ENCODE measurements at regions of chr2 and their contacts with region 1.

Region 1: DNA sequence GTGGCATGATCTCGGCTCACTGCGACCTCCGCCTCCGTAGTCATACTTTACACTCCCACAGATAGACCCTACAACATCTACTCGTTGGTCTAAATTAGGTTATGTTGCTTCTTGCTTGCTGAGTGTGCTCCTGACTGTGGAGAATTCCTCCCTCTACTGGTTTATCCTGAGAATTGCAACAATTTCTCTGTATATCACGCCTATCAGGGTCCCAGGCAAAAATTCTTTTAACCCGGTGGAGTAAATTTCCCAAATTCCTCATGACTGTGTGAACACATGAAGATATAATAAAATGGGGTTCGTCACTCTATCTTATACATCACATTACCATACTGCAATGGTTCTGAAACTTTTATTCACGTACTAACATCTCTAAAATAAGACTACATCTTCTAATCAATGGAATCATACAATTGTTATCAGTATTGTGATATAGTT is 156.7 kb downstream of the EVA1A start:
- DNase-seq: peak in 4 of 5 donors; percentile 31 to 37 (median 35)
- H3K4me3 ChIP-seq: no peak overlapping the region
- H3K4me3 Mint-ChIP-seq: no peak overlapping the region
- H3K27ac ChIP-seq: no peak overlapping the region
- H3K27ac Mint-ChIP-seq: no peak overlapping the region
- H3K4me1 ChIP-seq: no peaks in the 10 kb centered on the region
- H3K4me1 Mint-ChIP-seq: no peaks in the 10 kb centered on the region
- H3K27me3 ChIP-seq: peaks cover 6% of the 10 kb centered on the region
- H3K27me3 Mint-ChIP-seq: peaks cover 19 to 20% of the 10 kb centered on the region in 2 donors

Region 2: GRCh38 chr2:75199428-75200011 is 204.5 kb before region 1 on chr2 and contains the start of gene TACR1:
- CTCF ChIA-PET with region 1: interaction called, 4 read pairs
- POLR2A ChIA-PET with region 1: no interaction called
- intact Hi-C with region 1: loop called (anchors 1 kb)
- DNase-seq: peak; percentile 35 to 68 (median 46)
- H3K4me3 ChIP-seq: peak within 1 kb of the TSS in 1 of 2 donors; percentile 18
- H3K4me3 Mint-ChIP-seq: peak within 1 kb of the TSS; percentile 75 to 92 (median 84)
- H3K27ac ChIP-seq: no peak within 1 kb of the TSS
- H3K27ac Mint-ChIP-seq: no peak within 1 kb of the TSS
- H3K4me1 ChIP-seq: peaks cover 11% of the 10 kb centered on the region
- H3K4me1 Mint-ChIP-seq: peaks cover 2 to 18% (median 12%) of the 10 kb centered on the region in 4 donors
- H3K27me3 ChIP-seq: peaks cover 19% of the 10 kb centered on the region
- H3K27me3 Mint-ChIP-seq: peaks cover 43 to 53% of the 10 kb centered on the region in 2 donors
- total RNA-seq, gene TACR1: not detected

Region 3: DNA sequence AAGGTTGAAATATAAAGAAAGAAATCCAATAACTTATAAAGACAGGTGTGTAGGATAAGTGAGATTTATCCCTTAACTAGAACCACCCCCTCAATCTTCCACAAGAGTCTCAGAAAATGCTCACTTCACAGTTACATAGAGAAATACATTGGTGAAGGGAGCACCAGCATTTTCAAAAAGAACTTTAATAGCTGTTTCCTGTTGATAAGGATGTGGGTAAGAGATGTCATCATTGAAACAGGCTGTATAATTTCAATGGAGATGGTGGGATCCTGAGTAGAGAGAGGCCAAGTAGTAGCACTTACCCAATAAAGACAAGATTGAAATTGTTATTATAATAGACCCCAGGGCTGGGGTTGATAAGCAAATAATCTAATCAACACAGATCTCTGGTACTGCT is 42.5 kb before region 1 on chr2:
- CTCF ChIA-PET with region 1: no interaction called
- POLR2A ChIA-PET with region 1: no interaction called
- intact Hi-C with region 1: no loop called
- DNase-seq: no peak
- H3K4me3 ChIP-seq: no peak overlapping the region
- H3K4me3 Mint-ChIP-seq: no peak overlapping the region
- H3K27ac ChIP-seq: no peak overlapping the region
- H3K27ac Mint-ChIP-seq: no peak overlapping the region
- H3K4me1 ChIP-seq: no peaks in the 10 kb centered on the region
- H3K4me1 Mint-ChIP-seq: no peaks in the 10 kb centered on the region
- H3K27me3 ChIP-seq: no peaks in the 10 kb centered on the region
- H3K27me3 Mint-ChIP-seq: no peaks in the 10 kb centered on the region

Region 4: GRCh38 chr2:75375646-75376582 is 28.1 kb before region 1 on chr2:
- CTCF ChIA-PET with region 1: no interaction called
- POLR2A ChIA-PET with region 1: no interaction called
- intact Hi-C with region 1: no loop called
- DNase-seq: no peak
- H3K4me3 ChIP-seq: no peak overlapping the region
- H3K4me3 Mint-ChIP-seq: no peak overlapping the region
- H3K27ac ChIP-seq: no peak overlapping the region
- H3K27ac Mint-ChIP-seq: no peak overlapping the region
- H3K4me1 ChIP-seq: no peaks in the 10 kb centered on the region
- H3K4me1 Mint-ChIP-seq: no peaks in the 10 kb centered on the region
- H3K27me3 ChIP-seq: no peaks in the 10 kb centered on the region
- H3K27me3 Mint-ChIP-seq: peaks cover 12 to 14% of the 10 kb centered on the region in 2 donors